ENCODE measurements at regions of chr15 and their contacts with region 1.

Region 1: GRCh38 chr15:45903283-45903682 is 268.5 kb downstream of the SQOR start:
- DNase-seq: no peak
- H3K4me3 ChIP-seq: no peak overlapping the region
- H3K27ac ChIP-seq: no peak overlapping the region
- H3K4me1 ChIP-seq: no peaks in the 10 kb centered on the region
- H3K27me3 ChIP-seq: no peaks in the 10 kb centered on the region
- CTCF ChIP-seq: no peak

Region 2: DNA sequence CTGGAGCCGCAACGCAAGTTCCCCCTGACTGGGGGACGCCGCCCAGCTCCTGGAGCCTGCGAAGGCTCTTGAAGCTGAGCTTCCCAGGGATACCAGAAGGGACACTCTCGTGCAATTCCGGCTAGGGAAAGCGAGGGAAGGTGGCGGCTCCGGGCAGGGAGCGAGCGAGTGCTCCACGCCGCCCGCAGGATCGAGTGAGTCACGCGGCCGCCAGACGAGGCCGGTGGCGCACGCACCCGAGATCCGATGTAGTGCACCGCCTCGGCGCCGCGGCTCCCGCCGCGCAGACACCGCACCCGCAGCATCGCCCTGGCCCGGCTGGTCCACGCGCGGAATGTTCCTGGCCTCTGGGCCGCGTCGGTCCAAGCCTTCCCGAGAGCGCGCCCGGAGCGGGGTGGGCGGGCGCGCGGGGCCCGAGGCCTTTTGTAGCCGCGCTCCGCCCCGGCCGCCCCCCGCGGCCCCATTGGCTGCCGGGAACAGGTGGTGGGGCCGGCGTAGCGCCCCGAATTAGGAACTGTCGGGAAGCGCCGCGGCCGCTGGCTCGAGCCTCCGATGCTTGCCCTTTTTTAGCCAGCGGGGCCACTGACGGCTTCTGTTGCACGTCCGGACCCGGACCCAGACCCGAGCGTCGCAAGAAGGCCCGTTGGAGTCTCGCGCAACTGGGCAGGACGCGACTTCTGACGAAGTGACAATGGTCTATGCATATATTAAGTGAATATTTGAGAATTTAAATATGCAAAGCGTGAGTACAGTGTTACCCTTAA is 525.0 kb before region 1 on chr15 and contains the start of gene GATM:
- CTCF ChIA-PET with region 1: no interaction called
- POLR2A ChIA-PET with region 1: no interaction called
- intact Hi-C with region 1: no loop called
- DNase-seq: peak; percentile 58 to 72
- H3K4me3 ChIP-seq: peak within 1 kb of the TSS; percentile 57
- H3K27ac ChIP-seq: no peak within 1 kb of the TSS
- H3K4me1 ChIP-seq: no peaks in the 10 kb centered on the region
- H3K27me3 ChIP-seq: no peaks in the 10 kb centered on the region
- CTCF ChIP-seq: peak; percentile 45; the same call in 1 of the 2 replicates
- total RNA-seq, gene GATM: 9.8 and 10.0 TPM in 2 replicates

Region 3: DNA sequence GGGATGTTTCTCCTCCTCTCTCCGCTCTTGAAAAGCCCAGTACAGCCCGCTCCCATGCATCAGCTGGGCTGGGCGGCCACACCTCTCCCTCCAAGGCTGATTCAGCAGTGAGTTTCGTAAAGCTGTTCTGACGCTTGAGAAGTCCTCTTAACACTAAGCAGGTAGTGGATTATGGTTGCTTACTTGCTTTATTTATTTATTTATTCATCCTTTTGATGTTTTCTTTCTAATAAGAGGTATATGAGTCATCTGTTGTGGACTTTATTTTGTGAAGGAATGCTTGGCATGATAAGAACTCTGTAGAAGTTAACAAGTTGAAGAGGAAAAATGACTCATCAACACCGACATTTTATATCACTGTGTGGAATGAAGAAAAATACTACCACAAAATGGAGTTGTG is 16.5 kb after region 1 on chr15:
- CTCF ChIA-PET with region 1: interaction called, 13 read pairs
- POLR2A ChIA-PET with region 1: no interaction called
- intact Hi-C with region 1: no loop called
- DNase-seq: peak; percentile 72 to 92
- H3K4me3 ChIP-seq: no peak overlapping the region
- H3K27ac ChIP-seq: 0 out of 2 replicates have a peak overlapping the region, but pooled peaks have one; percentile 26
- H3K4me1 ChIP-seq: peaks cover 6% of the 10 kb centered on the region
- H3K27me3 ChIP-seq: no peaks in the 10 kb centered on the region
- CTCF ChIP-seq: no peak

Measured in PC-9 (cell line).